HEK293T (cell line): ENCODE measurements at regions of chr13 and their contacts with region 1.

Region 1: GRCh38 chr13:48233046-48233907 is at the start of gene ITM2B:
- DNase-seq: peak; percentile 83

Region 2: GRCh38 chr13:48302871-48303358 is 69.6 kb after region 1 on chr13:
- CTCF ChIA-PET with region 1: no interaction called
- POLR2A ChIA-PET with region 1: interaction called, 10 read pairs
- DNase-seq: no peak